HepG2 (cell line): ENCODE measurements at regions of chr11 and their contacts with region 1.

Region 1: GRCh38 chr11:102940714-102941588 is 14.6 kb downstream of the MMP13 start:
- DNase-seq: peak; percentile 56
- ATAC-seq: peak; percentile 91
- H3K4me3 ChIP-seq: no peak overlapping the region
- H3K27ac ChIP-seq: no peak overlapping the region
- H3K4me1 ChIP-seq: no peaks in the 10 kb centered on the region
- H3K27me3 ChIP-seq: no peaks in the 10 kb centered on the region
- CTCF ChIP-seq: peak; percentile 79
- EP300 ChIP-seq: no peak
- POLR2A ChIP-seq: no peak
- RAD21 ChIP-seq: peak; percentile 56; the same call in 1 of the 2 replicates

Region 2: DNA sequence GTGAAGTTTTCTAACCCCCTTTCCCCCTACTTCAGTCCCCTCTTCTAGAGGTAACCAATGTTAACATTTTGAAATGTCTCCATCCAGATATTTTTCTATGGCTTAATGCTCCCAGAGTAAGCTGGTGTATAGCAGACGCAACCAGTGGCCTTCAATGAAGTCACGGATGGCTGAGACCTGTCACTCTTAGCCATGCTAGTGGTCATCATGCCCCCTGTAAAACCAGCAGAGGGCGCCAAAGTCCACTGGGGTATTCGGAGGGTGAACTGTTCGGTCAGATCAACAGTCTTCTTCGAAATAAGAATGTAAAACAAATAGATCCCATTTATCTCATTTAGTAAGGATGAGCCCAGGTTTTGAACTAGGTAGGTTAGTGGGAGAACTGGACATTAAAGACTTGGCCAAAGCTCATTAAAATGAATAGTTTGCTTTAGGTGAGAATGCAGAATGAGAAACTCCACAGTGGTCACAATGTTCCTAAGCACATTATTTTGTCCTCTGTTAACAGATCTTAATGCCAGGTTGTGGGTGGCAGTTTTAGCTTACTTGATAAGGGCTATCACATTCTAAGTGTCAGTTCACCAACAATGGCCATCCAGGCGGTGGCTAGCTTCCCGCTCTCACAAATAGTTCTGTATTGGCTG is 207.6 kb before region 1 on chr11:
- CTCF ChIA-PET with region 1: interaction called, 6 read pairs
- POLR2A ChIA-PET with region 1: no interaction called
- in situ Hi-C with region 1: loop called (anchors 25 kb)
- intact Hi-C with region 1: no loop called
- DNase-seq: peak; percentile 60
- ATAC-seq: peak; percentile 99
- H3K4me3 ChIP-seq: no peak overlapping the region
- H3K27ac ChIP-seq: no peak overlapping the region
- H3K4me1 ChIP-seq: no peaks in the 10 kb centered on the region
- H3K27me3 ChIP-seq: no peaks in the 10 kb centered on the region
- CTCF ChIP-seq: peak; percentile 81
- EP300 ChIP-seq: no peak
- POLR2A ChIP-seq: no peak
- RAD21 ChIP-seq: peak; percentile 40; the same call in 1 of the 2 replicates

Region 3: DNA sequence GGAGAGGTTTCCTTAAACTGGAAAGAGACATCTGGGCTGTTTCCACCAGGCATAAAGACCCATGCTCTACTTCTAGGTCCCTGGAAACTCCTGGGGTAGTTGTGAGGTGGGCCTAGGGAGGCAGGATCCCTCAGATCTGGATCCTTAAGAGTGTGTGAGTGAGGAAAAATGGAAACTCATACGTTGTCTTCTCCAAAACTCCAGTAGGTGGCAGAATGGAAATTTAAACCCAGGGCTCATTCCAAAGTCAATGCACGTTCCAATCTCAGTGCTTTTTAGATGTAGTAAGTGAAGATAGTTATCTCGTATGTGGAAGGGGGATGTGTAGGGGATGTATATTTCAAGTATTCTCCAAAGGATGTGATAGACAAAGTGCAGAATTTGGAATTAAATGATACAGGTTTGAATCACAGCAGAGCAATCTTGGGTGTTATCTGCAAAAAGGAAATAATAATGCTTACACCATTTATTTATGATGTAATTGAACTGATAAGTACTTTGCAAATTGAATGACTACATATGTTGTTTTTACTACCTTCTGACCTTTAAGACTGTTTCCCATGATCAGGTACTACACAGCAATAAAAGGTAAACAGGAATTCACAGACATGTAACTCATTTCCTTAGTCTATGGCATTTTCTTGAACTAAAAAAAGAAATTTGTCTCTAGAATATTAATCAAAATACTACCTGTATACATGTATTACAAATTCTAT is 129.8 kb before region 1 on chr11:
- CTCF ChIA-PET with region 1: interaction called, 6 read pairs
- POLR2A ChIA-PET with region 1: no interaction called
- in situ Hi-C with region 1: loop called (anchors 10 kb)
- intact Hi-C with region 1: loop called (anchors 1 kb)
- DNase-seq: peak; percentile 12
- ATAC-seq: peak; percentile 68
- H3K4me3 ChIP-seq: no peak overlapping the region
- H3K27ac ChIP-seq: no peak overlapping the region
- H3K4me1 ChIP-seq: no peaks in the 10 kb centered on the region
- H3K27me3 ChIP-seq: peaks cover 0 to 4% of the 10 kb centered on the region in 2 experiments; a peak in 2 of 5 replicates
- CTCF ChIP-seq: peak; percentile 51
- EP300 ChIP-seq: no peak
- POLR2A ChIP-seq: no peak
- RAD21 ChIP-seq: no peak

Region 4: GRCh38 chr11:102831489-102832440 is 109.2 kb before region 1 on chr11:
- CTCF ChIA-PET with region 1: interaction called, 4 read pairs
- POLR2A ChIA-PET with region 1: no interaction called
- in situ Hi-C with region 1: loop called (anchors 10 kb)
- intact Hi-C with region 1: loop called (anchors 1 kb)
- DNase-seq: peak; percentile 5
- ATAC-seq: peak; percentile 91
- H3K4me3 ChIP-seq: peak overlapping the region; percentile 35 to 49 (median 47)
- H3K27ac ChIP-seq: no peak overlapping the region
- H3K4me1 ChIP-seq: peaks cover 13% of the 10 kb centered on the region
- H3K27me3 ChIP-seq: no peaks in the 10 kb centered on the region
- CTCF ChIP-seq: peak; percentile 80
- EP300 ChIP-seq: no peak
- POLR2A ChIP-seq: no peak
- RAD21 ChIP-seq: peak; percentile 36; the same call in 1 of the 2 replicates

Region 5: DNA sequence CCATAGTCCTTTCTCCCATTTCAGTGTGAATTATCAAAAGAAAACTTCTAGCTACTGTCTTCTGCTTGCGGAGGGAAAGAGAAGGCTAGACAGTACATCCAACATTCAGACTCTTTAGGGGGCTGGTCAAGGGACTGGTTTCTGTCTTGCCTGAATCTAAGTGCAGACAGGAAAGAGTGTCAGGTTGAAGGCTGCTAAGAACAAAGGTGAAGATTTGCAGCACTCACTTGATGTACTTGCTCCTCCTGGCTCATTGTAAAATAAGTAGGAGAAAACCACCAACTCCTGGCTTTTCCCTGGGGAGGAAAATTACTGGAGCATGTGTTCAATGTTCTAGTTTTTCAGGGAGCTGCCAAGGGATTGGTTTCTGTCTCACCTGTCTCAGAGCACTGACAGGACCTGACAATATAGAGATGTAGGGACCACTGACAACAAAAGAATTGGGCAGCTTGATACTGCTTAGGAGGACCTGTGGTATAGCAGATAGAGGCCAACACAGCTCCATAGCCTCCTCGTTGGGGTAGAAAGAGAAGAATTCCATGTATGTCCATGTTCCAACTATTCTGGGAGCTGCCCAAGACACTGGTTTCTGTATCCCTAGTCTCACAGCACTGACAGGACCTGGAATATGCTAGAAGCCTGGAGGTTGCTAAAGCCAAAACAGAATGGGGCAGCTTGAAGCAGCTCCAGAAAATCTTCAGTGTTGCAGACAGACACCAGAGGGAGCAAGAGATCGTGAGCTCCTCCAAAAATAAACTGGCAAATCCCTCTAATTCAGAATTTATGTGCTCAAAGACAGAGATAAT is 26.5 kb before region 1 on chr11:
- CTCF ChIA-PET with region 1: interaction called, 3 read pairs
- POLR2A ChIA-PET with region 1: no interaction called
- in situ Hi-C with region 1: no loop called
- intact Hi-C with region 1: loop called (anchors 2 kb)
- DNase-seq: peak; percentile 4
- ATAC-seq: peak; percentile 71
- H3K4me3 ChIP-seq: no peak overlapping the region
- H3K27ac ChIP-seq: no peak overlapping the region
- H3K4me1 ChIP-seq: no peaks in the 10 kb centered on the region
- H3K27me3 ChIP-seq: no peaks in the 10 kb centered on the region
- CTCF ChIP-seq: peak; percentile 32
- EP300 ChIP-seq: no peak
- POLR2A ChIP-seq: no peak
- RAD21 ChIP-seq: no peak

Region 6: DNA sequence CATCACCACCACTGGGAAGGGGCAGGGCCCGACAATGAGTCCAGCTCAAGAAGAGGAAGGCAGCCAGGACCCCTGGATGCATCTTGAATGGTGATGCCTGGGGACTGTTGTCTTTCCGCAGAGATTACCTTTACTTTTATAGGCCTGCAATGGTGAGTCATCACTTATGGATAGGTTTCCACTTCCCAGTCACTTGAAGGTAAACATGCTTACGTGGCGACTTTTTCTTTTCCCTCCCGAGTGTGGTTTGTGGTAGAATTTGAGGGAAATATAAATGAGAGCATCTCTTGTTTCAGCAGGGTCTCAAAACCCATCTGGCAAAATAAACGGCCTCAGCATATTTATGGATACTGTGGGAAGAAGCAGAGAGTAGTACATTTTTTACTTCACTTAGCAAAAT is 14.7 kb after region 1 on chr11 and contains the start of gene MMP13:
- CTCF ChIA-PET with region 1: no interaction called
- POLR2A ChIA-PET with region 1: no interaction called
- in situ Hi-C with region 1: no loop called
- intact Hi-C with region 1: no loop called
- DNase-seq: no peak
- ATAC-seq: no peak
- H3K4me3 ChIP-seq: no peak within 1 kb of the TSS
- H3K27ac ChIP-seq: no peak within 1 kb of the TSS
- H3K4me1 ChIP-seq: no peaks in the 10 kb centered on the region
- H3K27me3 ChIP-seq: no peaks in the 10 kb centered on the region
- CTCF ChIP-seq: no peak
- EP300 ChIP-seq: no peak
- POLR2A ChIP-seq: no peak
- RAD21 ChIP-seq: no peak
- total RNA-seq, gene MMP13: not detected in 2 replicates